Left ventricle myocardium inferior (tissue), 1 donor: ENCODE measurements at regions of chr2 and their contacts with region 1.

Region 1: DNA sequence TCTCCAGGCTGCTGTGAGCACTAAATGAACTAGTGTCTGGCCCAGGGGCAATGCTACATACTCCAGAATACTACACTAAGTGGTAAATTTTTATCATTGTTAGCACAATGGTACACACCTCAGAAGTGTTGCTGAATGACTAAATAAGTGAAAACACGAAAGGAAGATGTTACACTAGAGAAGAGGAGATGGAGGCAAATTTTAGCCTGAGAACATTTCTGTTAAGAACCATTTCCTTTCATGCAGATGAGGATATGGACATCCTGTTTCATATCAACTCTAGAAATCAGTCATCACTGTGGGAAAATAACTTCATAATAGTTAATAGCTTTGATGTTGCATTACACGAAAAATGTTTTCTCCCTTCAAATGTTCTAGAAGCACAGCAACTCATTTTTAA is 117.6 kb upstream of the STK17B start:
- DNase-seq: no peak
- H3K4me3 ChIP-seq: no peak overlapping the region
- H3K27ac ChIP-seq: peak overlapping the region; percentile 69
- H3K4me1 ChIP-seq: peaks cover 79% of the 10 kb centered on the region
- H3K27me3 ChIP-seq: no peaks in the 10 kb centered on the region
- CTCF ChIP-seq: no peak

Region 2: DNA sequence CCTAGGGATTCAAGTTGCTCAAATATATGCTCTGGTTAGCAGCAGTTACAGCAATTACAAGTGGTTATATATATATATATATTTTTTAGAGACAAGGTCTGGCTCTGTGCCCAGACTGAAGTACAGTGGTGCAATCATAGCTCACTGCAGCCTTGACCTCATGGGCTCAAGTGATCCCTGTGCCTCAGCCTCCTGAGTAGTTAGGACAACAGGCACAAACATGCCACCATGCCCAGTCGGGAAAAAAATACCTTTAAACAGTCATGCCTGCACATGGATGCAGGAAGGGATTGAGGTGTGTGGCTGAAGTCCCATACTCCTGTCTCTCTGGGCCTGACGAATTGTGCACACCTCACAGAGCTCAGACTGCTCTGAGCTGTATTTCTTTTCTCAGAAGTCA is 200.8 kb before region 1 on chr2:
- intact Hi-C with region 1: loop called (anchors 10 kb)
- DNase-seq: no peak
- H3K4me3 ChIP-seq: no peak overlapping the region
- H3K27ac ChIP-seq: no peak overlapping the region
- H3K4me1 ChIP-seq: peaks cover 4% of the 10 kb centered on the region
- H3K27me3 ChIP-seq: no peaks in the 10 kb centered on the region
- CTCF ChIP-seq: no peak

Region 3: DNA sequence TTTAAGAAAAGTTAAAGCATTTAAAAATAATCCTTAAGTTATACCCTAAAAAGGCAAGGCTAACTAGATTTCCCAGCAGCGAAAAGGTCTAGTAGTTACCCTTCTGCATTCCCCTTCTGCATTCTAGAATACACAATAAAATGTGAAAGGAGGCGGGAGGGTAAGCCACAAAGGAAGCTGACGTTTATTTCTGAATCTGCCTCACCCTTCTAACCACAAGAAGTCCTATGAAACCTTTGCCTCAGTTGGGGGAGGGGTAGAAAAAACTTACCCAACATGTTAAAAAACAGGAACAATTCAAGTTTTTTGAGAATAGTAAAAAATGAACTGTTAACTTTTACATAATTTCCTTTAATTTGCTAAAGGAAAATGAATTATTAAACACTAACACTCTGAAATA is 128.9 kb before region 1 on chr2:
- intact Hi-C with region 1: loop called (anchors 10 kb)
- DNase-seq: no peak
- H3K4me3 ChIP-seq: no peak overlapping the region
- H3K27ac ChIP-seq: peak overlapping the region; percentile 7
- H3K4me1 ChIP-seq: no peaks in the 10 kb centered on the region
- H3K27me3 ChIP-seq: no peaks in the 10 kb centered on the region
- CTCF ChIP-seq: no peak